CD4-positive, alpha-beta memory T cell (primary cell): ENCODE measurements at regions of chr16 and their contacts with region 1.

Region 1: DNA sequence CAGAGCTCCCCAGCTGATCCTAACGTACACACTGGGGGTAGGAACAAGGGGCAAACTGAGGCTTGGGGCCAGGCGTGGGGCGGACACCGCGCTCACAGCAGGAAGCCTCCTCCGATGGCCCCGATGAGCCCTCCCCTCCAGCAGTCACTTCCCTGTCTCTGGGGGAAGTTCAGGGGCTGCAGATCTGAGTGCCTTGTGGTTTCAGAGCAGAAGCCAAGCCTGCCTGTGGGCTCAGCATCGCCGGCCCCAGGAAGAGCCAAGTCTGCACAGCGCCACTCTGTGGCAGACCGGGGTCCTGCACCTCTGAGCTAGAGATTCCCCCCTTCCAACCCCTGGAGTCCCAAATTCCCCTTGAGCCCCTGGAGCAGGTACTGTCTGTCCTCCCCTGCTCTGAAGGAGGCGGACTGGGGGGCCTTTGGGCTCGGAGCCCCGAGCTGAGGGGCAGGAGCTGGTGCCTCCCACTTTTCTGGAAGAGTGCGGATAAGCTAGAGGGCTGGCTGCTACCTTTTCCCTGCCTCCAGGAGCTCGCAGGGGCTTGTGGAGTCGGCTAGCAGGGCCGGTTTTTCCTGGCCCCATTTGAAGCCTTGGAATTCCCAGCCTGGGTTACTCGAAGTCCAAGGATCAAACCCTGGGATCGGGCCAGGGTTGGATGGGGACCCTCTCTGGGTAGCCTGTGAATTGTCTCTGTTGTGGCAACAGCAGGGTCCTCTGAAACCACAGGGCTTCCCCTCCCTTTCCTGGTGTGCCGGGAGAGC is 2.9 kb downstream of the GSE1 start:
- DNase-seq: peak; percentile 72 to 78 (median 74)
- H3K4me3 ChIP-seq: peak overlapping the region in 1 of 2 donors; percentile 23
- H3K4me3 Mint-ChIP-seq: peak overlapping the region; percentile 70 to 89 (median 78)
- H3K27ac ChIP-seq: no peak overlapping the region
- H3K27ac Mint-ChIP-seq: peak overlapping the region in 5 of 7 donors; percentile 50 to 73 (median 57)
- H3K4me1 ChIP-seq: peaks cover 42% of the 10 kb centered on the region
- H3K4me1 Mint-ChIP-seq: peaks cover 11 to 39% (median 25%) of the 10 kb centered on the region in 4 donors
- H3K27me3 ChIP-seq: no peaks in the 10 kb centered on the region
- H3K27me3 Mint-ChIP-seq: no peaks in the 10 kb centered on the region

Region 2: DNA sequence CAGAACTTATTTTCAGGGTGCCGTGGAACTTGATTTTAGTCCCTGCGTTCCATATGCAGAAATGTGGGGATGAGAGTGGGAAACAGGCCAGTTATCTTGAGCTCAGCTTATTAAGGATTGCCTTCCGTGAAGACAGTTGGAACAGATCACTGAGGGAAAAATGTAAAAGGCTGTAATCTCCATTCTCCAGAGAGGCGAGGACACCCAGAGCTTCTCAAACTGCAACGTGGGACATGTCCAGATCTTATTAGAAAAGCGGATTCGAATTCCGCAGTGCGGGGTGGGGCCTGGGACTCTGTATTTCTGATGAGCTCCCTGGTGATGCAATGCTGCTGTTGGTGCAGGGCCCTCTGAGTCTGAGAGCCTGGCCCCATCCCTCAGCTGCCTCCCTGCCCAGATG is 318.1 kb before region 1 on chr16:
- CTCF ChIA-PET with region 1: no interaction called
- POLR2A ChIA-PET with region 1: no interaction called
- intact Hi-C with region 1: no loop called
- DNase-seq: no peak
- H3K4me3 ChIP-seq: no peak overlapping the region
- H3K4me3 Mint-ChIP-seq: no peak overlapping the region
- H3K27ac ChIP-seq: no peak overlapping the region
- H3K27ac Mint-ChIP-seq: no peak overlapping the region
- H3K4me1 ChIP-seq: peaks cover under 1% of the 10 kb centered on the region
- H3K4me1 Mint-ChIP-seq: peaks cover 0 to 3% (median 0%) of the 10 kb centered on the region in 4 donors
- H3K27me3 ChIP-seq: no peaks in the 10 kb centered on the region
- H3K27me3 Mint-ChIP-seq: peaks cover 4 to 5% of the 10 kb centered on the region in 2 donors

Region 3: DNA sequence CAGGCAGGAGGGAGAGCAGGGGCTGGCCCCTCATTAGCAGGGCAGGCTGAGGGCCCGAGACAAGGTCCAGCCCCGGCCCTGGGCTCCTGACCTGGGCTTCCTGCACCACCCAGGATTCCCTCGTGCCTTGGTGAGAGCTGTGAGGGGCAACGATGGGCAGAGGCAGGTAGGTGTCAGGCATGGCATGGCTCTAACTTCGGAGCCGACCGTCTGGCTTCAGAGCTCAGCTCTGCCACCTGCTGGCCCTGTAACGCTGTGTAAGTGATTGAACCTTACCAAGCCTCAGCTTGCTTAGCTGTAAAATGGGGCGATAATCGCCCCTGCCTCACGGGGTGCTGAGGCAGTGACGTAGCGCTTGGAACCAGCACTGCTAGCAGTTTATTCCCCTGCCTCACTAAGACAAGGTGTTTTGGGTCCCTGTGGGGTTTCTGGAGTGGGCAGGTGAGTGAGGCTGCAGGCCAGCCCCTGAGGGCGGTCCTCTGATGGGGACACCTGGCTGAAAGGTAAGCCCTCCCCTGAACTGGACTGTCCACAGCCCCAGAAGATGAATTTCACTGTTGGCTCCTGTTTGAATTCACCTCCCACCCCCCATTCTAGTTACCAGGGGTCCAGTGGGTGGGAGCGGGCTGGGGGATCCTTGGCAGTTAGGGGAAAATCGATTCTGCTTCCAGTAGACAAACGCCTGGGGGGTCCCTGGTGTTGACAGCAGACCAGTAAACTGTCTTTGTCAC is 187.7 kb before region 1 on chr16:
- CTCF ChIA-PET with region 1: interaction called, 77 read pairs
- POLR2A ChIA-PET with region 1: interaction called, 3 read pairs
- intact Hi-C with region 1: no loop called
- DNase-seq: peak in 3 of 5 donors; percentile 32 to 41 (median 39)
- H3K4me3 ChIP-seq: no peak overlapping the region
- H3K4me3 Mint-ChIP-seq: no peak overlapping the region
- H3K27ac ChIP-seq: no peak overlapping the region
- H3K27ac Mint-ChIP-seq: no peak overlapping the region
- H3K4me1 ChIP-seq: no peaks in the 10 kb centered on the region
- H3K4me1 Mint-ChIP-seq: peaks cover 0 to under 1% (median 0%) of the 10 kb centered on the region in 4 donors
- H3K27me3 ChIP-seq: no peaks in the 10 kb centered on the region
- H3K27me3 Mint-ChIP-seq: peaks cover 4 to 11% of the 10 kb centered on the region in 2 donors

Region 4: GRCh38 chr16:85491058-85491771 is 124.8 kb before region 1 on chr16:
- CTCF ChIA-PET with region 1: interaction called, 17 read pairs
- POLR2A ChIA-PET with region 1: no interaction called
- intact Hi-C with region 1: no loop called
- DNase-seq: peak in 4 of 5 donors; percentile 11 to 33 (median 24)
- H3K4me3 ChIP-seq: no peak overlapping the region
- H3K4me3 Mint-ChIP-seq: no peak overlapping the region
- H3K27ac ChIP-seq: no peak overlapping the region
- H3K27ac Mint-ChIP-seq: no peak overlapping the region
- H3K4me1 ChIP-seq: no peaks in the 10 kb centered on the region
- H3K4me1 Mint-ChIP-seq: no peaks in the 10 kb centered on the region
- H3K27me3 ChIP-seq: no peaks in the 10 kb centered on the region
- H3K27me3 Mint-ChIP-seq: no peaks in the 10 kb centered on the region

Region 5: GRCh38 chr16:85554112-85554813 is 61.8 kb before region 1 on chr16:
- CTCF ChIA-PET with region 1: interaction called, 29 read pairs
- POLR2A ChIA-PET with region 1: interaction called, 45 read pairs
- intact Hi-C with region 1: no loop called
- DNase-seq: peak; percentile 74 to 89 (median 75)
- H3K4me3 ChIP-seq: peak overlapping the region; percentile 65 to 76
- H3K4me3 Mint-ChIP-seq: peak overlapping the region; percentile 88 to 99 (median 94)
- H3K27ac ChIP-seq: peak overlapping the region; percentile 61
- H3K27ac Mint-ChIP-seq: peak overlapping the region; percentile 90 to 98 (median 96)
- H3K4me1 ChIP-seq: peaks cover 21% of the 10 kb centered on the region
- H3K4me1 Mint-ChIP-seq: peaks cover 17 to 43% (median 31%) of the 10 kb centered on the region in 4 donors
- H3K27me3 ChIP-seq: no peaks in the 10 kb centered on the region
- H3K27me3 Mint-ChIP-seq: peaks cover 0 to 1% of the 10 kb centered on the region in 2 donors

Region 6: DNA sequence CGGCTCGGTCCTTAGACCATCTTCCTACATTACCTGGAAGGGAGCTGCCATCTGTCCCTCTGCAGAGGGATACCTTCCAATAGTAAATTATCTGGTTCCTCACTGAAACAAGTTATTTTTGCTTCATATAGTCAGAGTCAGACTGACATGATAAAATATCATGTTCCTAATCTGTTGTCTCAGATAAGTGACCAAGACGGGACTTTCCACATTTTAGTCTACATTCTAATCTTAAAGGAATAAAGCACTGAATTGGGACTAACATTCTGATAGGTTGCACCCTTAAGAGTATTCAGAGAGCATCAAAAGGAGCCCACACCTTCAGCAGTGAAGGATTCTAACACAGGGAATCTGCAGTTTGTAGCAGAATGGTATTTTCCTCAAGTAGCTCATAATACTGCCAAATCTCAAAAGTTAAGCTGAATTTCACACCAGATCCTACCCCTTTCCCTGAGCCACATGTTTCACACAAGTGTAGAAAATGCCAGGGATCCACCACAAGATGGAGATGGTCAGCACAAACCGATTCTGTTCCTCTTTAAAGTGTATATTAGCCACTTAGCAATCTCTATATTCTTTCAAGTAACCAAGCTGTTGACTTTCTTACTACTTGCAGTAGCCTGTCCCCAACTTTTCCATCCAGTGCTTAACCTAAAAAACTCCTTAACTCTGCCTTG is 59.4 kb after region 1 on chr16:
- CTCF ChIA-PET with region 1: no interaction called
- POLR2A ChIA-PET with region 1: no interaction called
- intact Hi-C with region 1: no loop called
- DNase-seq: no peak
- H3K4me3 ChIP-seq: no peak overlapping the region
- H3K4me3 Mint-ChIP-seq: no peak overlapping the region
- H3K27ac ChIP-seq: no peak overlapping the region
- H3K27ac Mint-ChIP-seq: peak overlapping the region in 2 of 7 donors; percentile 29 to 66
- H3K4me1 ChIP-seq: peaks cover 2% of the 10 kb centered on the region
- H3K4me1 Mint-ChIP-seq: peaks cover 2 to 10% (median 6%) of the 10 kb centered on the region in 4 donors
- H3K27me3 ChIP-seq: no peaks in the 10 kb centered on the region
- H3K27me3 Mint-ChIP-seq: no peaks in the 10 kb centered on the region